Heart right ventricle (tissue), 16 donors: ENCODE measurements at regions of chr5 and their contacts with region 1.

Region 1: GRCh38 chr5:156326718-156327259 is at the start of gene SGCD:
- DNase-seq: peak; percentile 67 to 71
- ATAC-seq: peak; percentile 79 to 93 (median 90)
- H3K4me3 ChIP-seq: peak within 1 kb of the TSS; percentile 29 to 66 (median 53)
- H3K27ac ChIP-seq: peak within 1 kb of the TSS; percentile 9 to 88 (median 80)
- H3K4me1 ChIP-seq: peaks cover 0 to 37% (median 17%) of the 10 kb centered on the region in 9 donors
- H3K27me3 ChIP-seq: no peaks in the 10 kb centered on the region
- CTCF ChIP-seq: peak in 1 of 9 donors; percentile 6
- total RNA-seq, gene SGCD: 74.4 to 153 (median 101) TPM

Region 2: DNA sequence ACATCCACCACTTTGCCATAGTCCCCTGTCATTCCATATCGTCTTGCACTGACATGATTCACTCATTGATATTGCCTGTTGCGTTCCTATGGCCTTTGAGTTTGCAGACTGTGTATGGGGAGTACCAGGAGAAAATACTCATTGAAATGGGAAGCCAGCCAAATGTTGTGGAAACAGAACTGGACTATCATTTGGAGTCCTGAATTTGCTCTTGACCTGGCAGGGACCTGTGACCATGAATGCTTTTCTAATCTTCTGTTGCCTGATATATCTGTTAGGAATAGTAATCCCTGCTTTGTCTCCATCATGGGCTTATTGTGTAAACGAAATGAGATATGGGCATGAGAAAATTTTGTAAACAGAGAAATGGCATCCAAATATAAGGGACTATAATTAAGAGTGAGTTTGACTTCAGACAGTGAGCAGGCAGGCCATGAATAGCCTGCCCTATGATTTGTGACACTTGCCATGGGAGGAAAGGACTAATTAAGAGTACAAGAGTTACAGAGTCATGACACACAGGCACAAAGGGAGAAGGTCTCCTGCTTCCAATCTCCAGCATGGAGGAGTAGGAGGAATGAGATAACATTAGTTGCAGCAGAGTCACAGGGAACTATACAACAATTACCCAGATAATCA is 572.7 kb before region 1 on chr5:
- intact Hi-C with region 1: loop called in 1 of 10 experiments (anchors 10 kb)
- DNase-seq: peak in 1 of 2 donors; percentile 33
- ATAC-seq: peak; percentile 70 to 95 (median 93)
- H3K4me3 ChIP-seq: no peak overlapping the region
- H3K27ac ChIP-seq: peak overlapping the region in 8 of 10 donors; percentile 32 to 75 (median 56)
- H3K4me1 ChIP-seq: peaks cover 0 to 20% (median 5%) of the 10 kb centered on the region in 9 donors
- H3K27me3 ChIP-seq: no peaks in the 10 kb centered on the region
- CTCF ChIP-seq: no peak

Region 3: GRCh38 chr5:155954701-155955445 is 371.9 kb before region 1 on chr5:
- intact Hi-C with region 1: loop called in 1 of 10 experiments (anchors 10 kb)
- DNase-seq: no peak
- ATAC-seq: no peak
- H3K4me3 ChIP-seq: no peak overlapping the region
- H3K27ac ChIP-seq: no peak overlapping the region
- H3K4me1 ChIP-seq: peaks cover 0 to 39% (median 9%) of the 10 kb centered on the region in 9 donors
- H3K27me3 ChIP-seq: no peaks in the 10 kb centered on the region
- CTCF ChIP-seq: no peak

Region 4: GRCh38 chr5:156076912-156077311 is 249.9 kb before region 1 on chr5:
- intact Hi-C with region 1: no loop called
- DNase-seq: no peak
- ATAC-seq: no peak
- H3K4me3 ChIP-seq: no peak overlapping the region
- H3K27ac ChIP-seq: no peak overlapping the region
- H3K4me1 ChIP-seq: no peaks in the 10 kb centered on the region
- H3K27me3 ChIP-seq: no peaks in the 10 kb centered on the region
- CTCF ChIP-seq: no peak

Region 5: GRCh38 chr5:156295431-156295830 is 31.4 kb before region 1 on chr5:
- intact Hi-C with region 1: no loop called
- DNase-seq: no peak
- ATAC-seq: no peak
- H3K4me3 ChIP-seq: no peak overlapping the region
- H3K27ac ChIP-seq: no peak overlapping the region
- H3K4me1 ChIP-seq: no peaks in the 10 kb centered on the region
- H3K27me3 ChIP-seq: no peaks in the 10 kb centered on the region
- CTCF ChIP-seq: no peak

Region 6: GRCh38 chr5:156469636-156470035 is 142.8 kb after region 1 on chr5:
- intact Hi-C with region 1: loop called in 1 of 10 experiments (anchors 5 kb)
- DNase-seq: no peak
- ATAC-seq: no peak
- H3K4me3 ChIP-seq: no peak overlapping the region
- H3K27ac ChIP-seq: no peak overlapping the region
- H3K4me1 ChIP-seq: peaks cover 5 to 20% (median 16%) of the 10 kb centered on the region in 9 donors
- H3K27me3 ChIP-seq: no peaks in the 10 kb centered on the region
- CTCF ChIP-seq: no peak

Region 7: DNA sequence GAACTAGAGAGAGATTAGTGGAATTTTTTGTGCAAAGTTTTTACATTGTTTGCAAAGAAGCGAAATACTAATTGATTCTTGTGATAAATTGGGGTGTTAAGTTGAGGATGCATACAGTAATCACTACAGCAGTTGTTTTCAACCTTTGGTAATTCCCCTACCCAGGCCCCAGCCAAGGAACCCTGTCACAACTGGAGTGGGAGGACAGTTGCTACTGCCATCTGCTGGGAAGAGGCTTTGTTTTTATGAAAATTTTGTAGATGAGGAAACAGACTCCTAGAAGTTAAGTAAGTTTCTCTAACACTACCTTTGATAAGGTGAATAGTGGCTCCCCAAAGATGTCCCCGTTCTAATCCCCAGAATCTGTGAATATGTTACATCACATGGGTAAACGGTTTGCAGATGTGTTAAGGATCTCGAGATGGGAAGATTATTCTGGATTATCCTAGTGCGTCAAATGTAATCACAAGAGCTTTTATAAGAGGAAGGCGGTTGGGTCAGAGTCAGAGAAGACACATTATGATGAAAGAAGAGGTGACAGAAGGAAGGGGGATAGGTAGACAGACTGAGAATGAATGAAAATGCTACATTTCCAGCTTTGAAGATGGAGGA is 489.3 kb after region 1 on chr5:
- intact Hi-C with region 1: loop called in 3 of 10 experiments (anchors 5 to 10 kb)
- DNase-seq: peak in 1 of 2 donors; percentile 26
- ATAC-seq: peak in 4 of 8 donors; percentile 35 to 59 (median 52)
- H3K4me3 ChIP-seq: no peak overlapping the region
- H3K27ac ChIP-seq: no peak overlapping the region
- H3K4me1 ChIP-seq: no peaks in the 10 kb centered on the region
- H3K27me3 ChIP-seq: no peaks in the 10 kb centered on the region
- CTCF ChIP-seq: peak in 8 of 9 donors; percentile 17 to 62 (median 49)